Cardiac septum (tissue), 1 donor: ENCODE measurements at regions of chr1 and their contacts with region 1.

Region 1: DNA sequence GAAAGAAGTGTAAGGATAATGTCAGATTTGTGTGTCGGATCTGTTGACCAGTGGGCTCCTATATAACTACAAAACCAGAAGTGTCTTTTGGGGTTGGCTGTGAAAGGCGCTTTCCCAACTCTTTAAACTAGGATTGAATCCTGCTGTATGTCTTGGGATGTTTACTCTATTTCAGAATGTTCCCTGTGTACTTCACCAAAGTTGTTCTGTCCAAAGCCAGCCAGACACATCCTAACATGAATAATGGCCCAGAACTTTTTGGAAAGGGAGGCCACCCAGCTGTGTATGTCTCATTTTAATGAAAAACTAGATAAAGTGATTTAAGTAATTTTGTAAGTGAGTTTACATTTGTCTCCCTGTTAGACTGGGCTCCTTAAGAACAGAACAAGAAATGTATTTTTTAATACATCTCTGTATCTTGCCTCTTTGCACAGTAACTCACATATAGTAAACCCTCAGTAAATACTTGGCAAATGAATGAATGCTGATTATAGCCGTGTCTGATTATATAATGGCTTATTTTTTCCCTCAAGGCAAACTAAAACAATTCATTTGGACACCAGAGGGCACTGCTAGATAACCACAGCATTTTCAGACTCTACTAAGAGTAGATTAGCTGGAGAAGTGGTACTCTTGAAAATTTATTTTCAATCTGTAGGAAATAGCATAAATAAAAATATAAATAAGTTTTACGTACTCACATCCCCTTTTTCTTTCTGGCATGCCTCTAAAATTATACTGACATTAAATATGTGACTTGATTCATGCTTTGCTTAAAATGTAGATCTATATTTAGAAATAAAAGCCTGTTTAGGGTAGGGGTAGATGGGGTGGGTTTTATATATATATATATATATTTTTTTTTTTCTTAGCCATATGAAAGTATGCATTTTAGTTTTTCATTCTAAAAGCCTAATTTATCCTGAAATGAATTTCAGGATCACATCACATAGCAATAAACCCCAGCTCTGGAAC is 23.8 kb downstream of the TSEN15 start:
- DNase-seq: no peak

Region 2: DNA sequence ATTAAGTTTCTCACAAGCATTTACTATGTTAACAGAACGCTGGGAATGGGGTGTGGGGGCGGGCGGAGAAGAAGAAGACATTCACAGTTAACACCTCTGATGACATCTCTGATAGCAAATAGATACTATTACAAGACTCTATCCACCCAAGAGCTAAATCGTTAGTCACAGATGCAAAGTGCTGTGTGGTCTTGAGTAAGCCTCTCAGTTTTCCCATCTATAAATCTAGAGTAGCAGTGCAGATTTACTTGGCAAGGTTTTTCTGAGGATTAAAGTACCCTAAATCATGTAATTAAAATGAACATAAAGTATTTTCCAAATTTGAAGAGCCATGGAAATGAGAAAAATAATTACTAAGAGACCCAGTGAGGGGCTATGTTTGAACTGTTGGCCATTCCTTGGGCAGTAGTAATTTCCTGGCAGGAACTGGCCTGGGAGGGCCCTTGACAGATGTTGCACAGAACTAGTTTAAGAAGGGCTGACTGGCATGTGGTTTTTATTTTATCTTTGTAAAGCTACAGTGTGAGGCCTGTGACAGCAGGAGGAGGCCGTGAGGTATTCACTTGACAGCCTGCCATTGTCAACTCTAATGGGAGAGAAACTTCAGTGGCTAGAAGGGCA is 363.5 kb before region 1 on chr1:
- intact Hi-C with region 1: no loop called
- DNase-seq: no peak

Region 3: DNA sequence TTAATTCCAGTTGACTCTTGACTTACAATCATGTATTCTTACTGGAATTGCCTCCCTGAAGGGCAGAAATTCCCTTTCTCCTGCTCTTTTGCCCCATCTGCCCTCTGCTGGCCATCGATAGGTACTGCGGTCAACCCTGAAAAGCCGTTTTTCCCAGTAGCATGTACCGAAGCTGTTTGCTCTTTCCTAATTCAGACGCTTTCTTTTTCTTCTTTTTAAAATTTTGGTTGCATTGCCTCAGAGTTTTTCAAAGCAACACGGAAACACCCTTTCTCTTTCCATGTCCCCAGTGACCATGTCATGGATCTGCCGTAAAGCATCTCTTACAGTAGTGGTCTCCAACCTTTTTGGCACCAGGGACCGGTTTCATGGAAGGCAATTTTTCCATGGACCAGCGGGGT is 147.3 kb after region 1 on chr1:
- intact Hi-C with region 1: loop called (anchors 1 kb)
- DNase-seq: no peak

Region 4: DNA sequence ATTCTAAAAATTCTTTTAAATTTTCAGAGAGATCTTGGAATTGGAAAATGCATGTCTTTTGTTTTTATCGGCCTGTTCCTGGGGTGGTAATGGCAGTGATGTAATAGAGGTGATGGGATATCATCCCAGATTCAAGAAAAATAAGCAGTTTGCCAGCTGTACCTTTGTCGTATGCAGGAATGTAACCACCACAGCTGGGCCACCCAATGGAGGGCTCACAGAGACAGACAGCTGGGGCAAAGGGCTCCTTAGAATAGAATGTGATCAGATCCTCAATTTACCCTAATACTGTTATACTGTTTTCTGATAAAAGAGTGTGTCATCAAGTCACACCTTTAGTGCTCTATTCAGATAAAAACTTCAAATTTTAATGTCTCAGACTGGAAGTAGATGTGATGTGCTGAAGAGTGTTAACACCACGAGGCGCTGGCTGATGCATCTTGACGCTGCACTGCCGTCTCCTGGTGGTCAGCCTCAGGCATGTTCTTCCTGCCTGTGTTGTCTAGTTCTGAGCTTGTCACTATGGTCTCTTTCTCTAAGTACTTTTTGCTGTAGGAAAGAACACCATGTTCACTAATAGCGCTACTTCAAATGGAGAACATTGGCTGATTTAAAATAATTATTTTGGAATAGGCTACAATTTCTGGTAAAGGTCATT is 390.3 kb after region 1 on chr1:
- intact Hi-C with region 1: loop called (anchors 10 kb)
- DNase-seq: no peak